Breast epithelium (tissue), 4 donors: ENCODE measurements at regions of chr9 and their contacts with region 1.

Region 1: GRCh38 chr9:94153905-94154304 is 69.6 kb downstream of the PTPDC1 start:
- DNase-seq: no peak
- H3K4me3 ChIP-seq: no peak overlapping the region
- H3K27ac ChIP-seq: no peak overlapping the region
- H3K4me1 ChIP-seq: peaks cover 7 to 14% of the 10 kb centered on the region in 2 donors
- H3K27me3 ChIP-seq: no peaks in the 10 kb centered on the region
- CTCF ChIP-seq: no peak
- POLR2A ChIP-seq: no peak

Region 2: DNA sequence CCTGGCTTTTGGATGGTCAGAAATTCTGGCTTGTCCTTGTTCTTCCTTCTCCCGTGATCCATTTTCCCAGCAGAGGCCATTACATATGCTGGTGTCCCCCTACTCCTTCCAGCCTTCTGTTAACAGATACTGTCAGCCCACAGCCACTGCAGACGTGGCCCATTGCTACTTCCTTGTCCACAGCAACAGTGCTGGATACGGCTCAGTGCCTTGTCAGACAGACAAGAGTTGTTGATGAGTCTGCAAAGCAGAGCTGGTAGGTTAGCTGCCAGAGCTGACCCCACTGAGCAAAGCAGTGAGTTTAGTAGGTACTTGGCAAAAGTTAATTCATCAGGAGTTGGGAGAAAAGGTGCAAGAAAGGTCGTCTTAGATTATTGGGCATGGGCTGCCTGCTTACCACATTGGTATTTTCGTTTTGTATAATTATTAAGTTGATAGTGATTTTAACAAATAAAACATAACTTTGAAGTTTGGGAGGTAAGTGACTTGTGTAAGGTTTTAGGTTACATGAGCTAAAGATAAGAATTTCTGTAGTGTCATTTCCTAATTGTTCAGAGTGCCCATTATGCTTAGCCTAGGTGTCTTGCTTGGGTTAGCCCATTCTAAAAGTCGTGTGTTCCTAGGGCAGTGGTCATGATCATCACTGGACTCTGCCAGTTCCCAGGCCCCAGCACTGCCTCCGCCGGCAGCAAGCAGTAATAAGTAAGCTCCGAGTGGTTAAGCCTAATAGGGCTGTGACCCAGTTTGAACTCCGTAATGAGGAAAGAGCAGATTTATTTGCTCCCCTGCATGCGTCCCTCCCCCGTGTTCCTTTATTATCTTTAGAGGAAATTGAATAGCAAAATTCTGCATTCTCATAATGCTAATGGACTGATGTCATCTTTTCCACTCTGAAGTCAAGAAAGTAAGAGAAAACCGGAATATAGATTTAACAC is 871.6 kb after region 1 on chr9:
- intact Hi-C with region 1: loop called (anchors 5 kb)
- DNase-seq: no peak
- H3K4me3 ChIP-seq: no peak overlapping the region
- H3K27ac ChIP-seq: peak overlapping the region in 1 of 2 donors; percentile 38
- H3K4me1 ChIP-seq: no peaks in the 10 kb centered on the region
- H3K27me3 ChIP-seq: no peaks in the 10 kb centered on the region
- CTCF ChIP-seq: peak in 1 of 3 donors; percentile 20
- POLR2A ChIP-seq: no peak